ENCODE measurements at regions of chr18 and their contacts with region 1.

Region 1: GRCh38 chr18:50334546-50335152 is 40.2 kb upstream of the SKA1 start:
- DNase-seq: no peak
- CTCF ChIP-seq: no peak

Region 2: DNA sequence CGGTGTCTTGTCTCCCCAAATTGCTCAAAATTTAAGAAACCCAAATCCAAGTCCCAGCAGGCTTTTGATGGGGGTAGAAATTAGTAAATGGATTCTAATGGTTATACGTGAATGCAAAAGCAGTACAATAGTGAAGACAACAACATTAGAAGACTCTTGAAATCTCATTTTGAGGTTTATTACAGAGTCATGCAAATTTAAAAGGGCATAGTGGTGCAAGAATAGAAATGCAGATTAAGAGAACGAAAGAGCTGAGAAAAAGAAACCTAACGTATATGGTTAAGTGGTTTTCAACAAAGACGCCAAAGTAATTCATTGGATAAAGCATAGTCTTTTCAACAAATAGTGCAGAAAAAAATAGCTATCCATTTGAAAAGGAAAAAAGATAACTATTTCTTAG is 13.9 kb before region 1 on chr18:
- CTCF ChIA-PET with region 1: interaction called, 12 read pairs
- POLR2A ChIA-PET with region 1: no interaction called
- DNase-seq: no peak
- CTCF ChIP-seq: no peak

Region 3: GRCh38 chr18:50578651-50579050 is 244.0 kb after region 1 on chr18:
- CTCF ChIA-PET with region 1: no interaction called
- POLR2A ChIA-PET with region 1: no interaction called
- DNase-seq: no peak
- CTCF ChIP-seq: no peak

Measured in GM10248 (cell line).